PC-9 (cell line): ENCODE measurements at regions of chr15 and their contacts with region 1.

Region 1: GRCh38 chr15:89035658-89036057 is 52.6 kb upstream of the ABHD2 start:
- DNase-seq: no peak
- H3K4me3 ChIP-seq: no peak overlapping the region
- H3K27ac ChIP-seq: no peak overlapping the region
- H3K4me1 ChIP-seq: no peaks in the 10 kb centered on the region
- H3K27me3 ChIP-seq: peaks cover 7% of the 10 kb centered on the region; the same call in 1 of the 2 replicates
- CTCF ChIP-seq: no peak

Region 2: DNA sequence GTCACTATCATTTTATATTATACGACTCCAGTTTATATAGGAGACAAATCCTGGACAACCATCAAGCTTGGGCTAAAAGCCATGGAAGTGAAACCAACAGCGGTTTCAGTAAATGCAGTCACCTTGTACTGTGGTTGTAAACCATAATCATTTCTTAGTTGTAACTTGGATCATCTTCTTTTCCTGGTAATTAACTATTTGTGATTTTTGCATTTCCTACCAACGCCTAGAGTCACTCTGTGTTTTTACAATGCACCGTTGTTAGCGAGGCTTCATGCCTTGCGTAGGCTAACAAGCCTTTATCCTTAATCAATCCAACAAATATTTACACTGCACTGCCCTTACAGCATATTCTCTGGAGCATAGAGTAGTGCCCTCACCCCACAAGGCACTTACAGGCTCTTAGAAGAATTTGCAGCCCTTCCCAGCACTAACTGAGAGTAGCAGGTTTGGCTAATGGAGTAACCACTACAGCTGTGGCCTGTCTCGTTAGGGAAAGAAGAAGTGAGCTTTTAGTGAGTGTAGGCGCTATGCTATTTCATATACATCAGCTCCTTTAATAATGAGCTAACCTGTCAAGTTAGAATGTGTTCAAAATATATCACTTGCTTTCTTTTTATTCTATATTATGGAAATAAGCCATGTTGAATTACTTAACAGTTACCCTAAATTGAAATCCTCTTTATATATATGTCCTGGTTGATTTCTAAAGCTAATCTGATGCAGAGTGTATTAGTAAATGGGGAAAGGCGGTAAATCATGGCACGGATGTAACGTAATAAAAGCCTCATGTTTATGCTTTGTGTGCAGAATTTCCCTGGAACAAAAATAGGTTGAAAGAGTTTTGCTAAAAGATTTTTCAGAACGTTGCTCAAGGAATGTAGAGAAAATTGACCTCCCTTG is 115.4 kb after region 1 on chr15:
- CTCF ChIA-PET with region 1: interaction called, 10 read pairs
- POLR2A ChIA-PET with region 1: no interaction called
- intact Hi-C with region 1: no loop called
- DNase-seq: no peak
- H3K4me3 ChIP-seq: no peak overlapping the region
- H3K27ac ChIP-seq: no peak overlapping the region
- H3K4me1 ChIP-seq: no peaks in the 10 kb centered on the region
- H3K27me3 ChIP-seq: no peaks in the 10 kb centered on the region
- CTCF ChIP-seq: no peak